B cell (primary cell): ENCODE measurements at regions of chr13 and their contacts with region 1.

Region 1: GRCh38 chr13:109786457-109787134 is at the start of gene IRS2:
- DNase-seq: peak; percentile 97
- ATAC-seq: peak; percentile 83
- H3K4me3 ChIP-seq: peak within 1 kb of the TSS; percentile 52 to 72 (median 70)
- H3K4me3 Mint-ChIP-seq: peak within 1 kb of the TSS; percentile 88
- H3K27ac ChIP-seq: peak within 1 kb of the TSS; percentile 44 to 72
- H3K27ac Mint-ChIP-seq: peak within 1 kb of the TSS; percentile 93
- H3K4me1 ChIP-seq: peaks cover 3 to 13% of the 10 kb centered on the region in 2 donors
- H3K4me1 Mint-ChIP-seq: peaks cover 8% of the 10 kb centered on the region
- H3K27me3 ChIP-seq: peaks cover 0 to 11% (median 0%) of the 10 kb centered on the region in 4 experiments
- H3K27me3 Mint-ChIP-seq: peaks cover 11% of the 10 kb centered on the region
- CTCF ChIP-seq: no peak
- total RNA-seq, gene IRS2: 26.9 and 27.7 TPM in 2 replicates

Region 2: GRCh38 chr13:108915634-108916512 is 870.7 kb before region 1 on chr13:
- CTCF ChIA-PET with region 1: no interaction called
- POLR2A ChIA-PET with region 1: no interaction called
- intact Hi-C with region 1: loop called (anchors 5 kb)
- DNase-seq: peak; percentile 18
- ATAC-seq: peak; percentile 74
- H3K4me3 ChIP-seq: no peak overlapping the region
- H3K4me3 Mint-ChIP-seq: peak overlapping the region; percentile 78
- H3K27ac ChIP-seq: no peak overlapping the region
- H3K27ac Mint-ChIP-seq: peak overlapping the region; percentile 91
- H3K4me1 ChIP-seq: peaks cover 0 to 9% of the 10 kb centered on the region in 2 donors
- H3K4me1 Mint-ChIP-seq: peaks cover 16% of the 10 kb centered on the region
- H3K27me3 ChIP-seq: no peaks in the 10 kb centered on the region
- H3K27me3 Mint-ChIP-seq: peaks cover 9% of the 10 kb centered on the region
- CTCF ChIP-seq: no peak

Region 3: GRCh38 chr13:109145631-109146030 is 641.0 kb before region 1 on chr13:
- CTCF ChIA-PET with region 1: interaction called, 13 read pairs
- POLR2A ChIA-PET with region 1: no interaction called
- intact Hi-C with region 1: loop called (anchors 2 kb)
- DNase-seq: peak; percentile 31
- ATAC-seq: peak; percentile 24
- H3K4me3 ChIP-seq: no peak overlapping the region
- H3K4me3 Mint-ChIP-seq: no peak overlapping the region
- H3K27ac ChIP-seq: no peak overlapping the region
- H3K27ac Mint-ChIP-seq: no peak overlapping the region
- H3K4me1 ChIP-seq: no peaks in the 10 kb centered on the region
- H3K4me1 Mint-ChIP-seq: no peaks in the 10 kb centered on the region
- H3K27me3 ChIP-seq: peaks cover 0 to 16% (median 8%) of the 10 kb centered on the region in 4 experiments
- H3K27me3 Mint-ChIP-seq: peaks cover 43% of the 10 kb centered on the region
- CTCF ChIP-seq: peak; percentile 67

Region 4: DNA sequence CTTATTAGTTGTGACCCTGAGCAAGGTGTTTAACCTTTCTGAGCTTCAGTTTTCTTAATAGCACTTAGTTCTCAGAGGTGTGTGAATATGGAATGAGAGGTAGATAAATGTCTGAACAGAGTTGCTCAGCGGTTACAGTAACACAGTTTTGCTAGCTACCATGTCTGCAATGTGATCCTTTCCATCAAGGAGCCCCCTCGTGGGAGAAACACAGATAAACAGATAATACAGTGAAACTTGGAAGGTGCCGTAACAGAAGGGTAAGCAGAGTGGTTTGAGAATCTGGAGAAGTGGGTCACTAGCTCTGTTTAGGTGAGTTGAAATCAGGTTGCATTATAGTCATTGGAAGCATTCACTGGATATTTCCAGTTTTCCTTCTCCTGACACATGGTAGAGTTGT is 39.1 kb before region 1 on chr13:
- CTCF ChIA-PET with region 1: no interaction called
- POLR2A ChIA-PET with region 1: no interaction called
- intact Hi-C with region 1: no loop called
- DNase-seq: no peak
- ATAC-seq: no peak
- H3K4me3 ChIP-seq: no peak overlapping the region
- H3K4me3 Mint-ChIP-seq: no peak overlapping the region
- H3K27ac ChIP-seq: no peak overlapping the region
- H3K27ac Mint-ChIP-seq: no peak overlapping the region
- H3K4me1 ChIP-seq: no peaks in the 10 kb centered on the region
- H3K4me1 Mint-ChIP-seq: no peaks in the 10 kb centered on the region
- H3K27me3 ChIP-seq: peaks cover 0 to 2% (median 0%) of the 10 kb centered on the region in 4 experiments
- H3K27me3 Mint-ChIP-seq: peaks cover 7% of the 10 kb centered on the region
- CTCF ChIP-seq: no peak

Region 5: DNA sequence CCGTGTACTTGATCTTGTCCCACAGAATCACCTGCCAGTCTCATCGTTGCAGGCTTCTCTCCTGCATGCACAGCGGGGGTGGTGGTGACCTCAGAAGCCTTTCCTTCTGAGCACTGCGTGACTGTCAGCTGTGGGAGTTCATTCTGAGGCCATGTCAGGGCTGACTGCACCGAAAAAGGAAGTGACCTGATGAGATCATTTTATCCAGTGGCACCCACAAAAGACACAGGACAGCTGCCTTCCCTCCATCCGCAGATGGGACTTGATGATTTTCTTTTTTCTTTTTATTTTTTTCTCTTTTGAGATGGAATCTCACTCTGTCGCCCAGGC is 685.2 kb after region 1 on chr13:
- CTCF ChIA-PET with region 1: no interaction called
- POLR2A ChIA-PET with region 1: interaction called, 3 read pairs
- intact Hi-C with region 1: loop called (anchors 5 kb)
- DNase-seq: peak; percentile 89
- ATAC-seq: peak; percentile 94
- H3K4me3 ChIP-seq: peak overlapping the region in 2 of 5 experiments; percentile 17 to 19
- H3K4me3 Mint-ChIP-seq: peak overlapping the region; percentile 85
- H3K27ac ChIP-seq: peak overlapping the region; percentile 80 to 83
- H3K27ac Mint-ChIP-seq: peak overlapping the region; percentile 89
- H3K4me1 ChIP-seq: peaks cover 38 to 50% of the 10 kb centered on the region in 2 donors
- H3K4me1 Mint-ChIP-seq: peaks cover 49% of the 10 kb centered on the region
- H3K27me3 ChIP-seq: peaks cover 0 to 2% (median 0%) of the 10 kb centered on the region in 4 experiments
- H3K27me3 Mint-ChIP-seq: no peaks in the 10 kb centered on the region
- CTCF ChIP-seq: no peak